Dorsolateral prefrontal cortex (tissue), 120 donors: ENCODE measurements at regions of chr18 and their contacts with region 1.

Region 1: DNA sequence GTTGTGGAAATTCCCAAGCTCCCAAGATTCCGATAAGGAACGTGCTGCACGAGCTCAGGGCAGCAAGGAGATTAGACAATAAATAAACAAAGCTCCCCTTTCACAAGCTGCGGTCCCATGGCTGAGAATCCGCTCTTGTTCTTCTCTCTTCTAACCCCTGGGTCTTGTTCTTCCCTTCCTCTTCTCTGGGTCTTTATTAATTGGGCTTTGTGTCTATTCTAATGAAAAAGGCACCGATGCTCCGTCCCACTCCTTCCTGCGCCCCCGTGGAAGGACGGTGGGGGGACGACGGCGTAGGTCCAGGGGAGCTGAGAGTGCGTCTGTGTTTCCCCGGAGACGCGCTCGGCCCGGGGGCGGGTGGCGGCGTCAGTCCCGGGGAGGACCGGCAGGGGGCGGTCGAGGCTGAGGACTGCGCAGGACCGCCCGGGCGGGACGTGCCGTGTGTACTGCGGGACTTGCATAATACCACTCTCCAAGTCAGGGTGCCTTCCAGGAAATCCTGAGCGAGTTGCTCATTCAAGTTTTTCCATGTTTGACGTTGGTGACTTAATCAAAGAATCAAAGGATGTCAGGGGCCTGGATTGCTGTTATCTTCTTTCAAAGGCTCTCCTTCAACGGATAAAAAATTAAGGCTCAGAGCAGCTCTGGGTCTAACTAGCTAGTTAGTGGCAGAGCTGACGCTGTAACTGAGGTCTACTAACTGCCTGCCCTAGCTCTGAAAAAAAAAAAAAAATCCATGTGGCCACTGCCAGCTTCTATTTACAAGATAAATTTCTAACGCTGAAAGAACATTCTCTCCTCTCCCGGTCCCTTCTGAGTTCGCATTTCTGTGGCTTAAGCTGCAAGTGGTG is 321.4 kb downstream of the TGIF1 start:
- DNase-seq: peak; percentile 76 to 94 (median 84)
- H3K4me3 ChIP-seq: peak overlapping the region; percentile 15 to 71 (median 51)
- H3K27ac ChIP-seq: peak overlapping the region in 58 of 59 donors; percentile 23 to 89 (median 71)
- H3K27me3 ChIP-seq: no peaks in the 10 kb centered on the region
- CTCF ChIP-seq: peak; percentile 81 to 99 (median 96)

Region 2: DNA sequence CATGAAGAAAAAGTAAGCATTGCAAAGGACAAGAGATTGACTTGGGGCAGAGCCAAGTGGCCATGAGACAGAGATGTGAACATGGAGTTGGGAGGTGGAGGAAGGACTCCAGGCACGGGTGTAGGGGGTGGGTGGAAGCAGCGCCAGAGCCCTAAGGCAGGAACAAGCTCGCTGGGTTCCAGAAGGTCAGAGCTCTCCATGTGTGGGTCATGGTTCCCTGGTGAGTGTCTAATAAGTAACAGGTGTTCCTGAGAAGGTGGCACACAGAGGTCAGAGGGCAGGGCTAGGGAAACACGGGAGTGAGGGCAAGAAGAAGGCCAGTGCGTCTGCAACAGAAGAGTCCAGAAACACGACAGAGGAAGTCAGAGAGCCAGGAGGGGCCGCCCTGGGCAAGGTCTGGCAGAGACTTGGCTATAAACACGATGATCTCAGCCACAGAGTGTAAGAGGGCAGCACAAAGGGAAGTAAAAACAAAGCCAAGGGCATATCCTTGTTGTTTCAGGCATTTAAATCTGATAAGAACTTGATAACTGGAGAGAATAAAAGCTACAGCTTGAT is 60.6 kb before region 1 on chr18:
- intact Hi-C with region 1: loop called in 1 of 2 experiments (anchors 10 kb)
- DNase-seq: peak in 1 of 10 donors; percentile 66
- H3K4me3 ChIP-seq: no peak overlapping the region
- H3K27ac ChIP-seq: peak overlapping the region in 53 of 59 donors; percentile 5 to 89 (median 65)
- H3K27me3 ChIP-seq: no peaks in the 10 kb centered on the region
- CTCF ChIP-seq: no peak

Region 3: DNA sequence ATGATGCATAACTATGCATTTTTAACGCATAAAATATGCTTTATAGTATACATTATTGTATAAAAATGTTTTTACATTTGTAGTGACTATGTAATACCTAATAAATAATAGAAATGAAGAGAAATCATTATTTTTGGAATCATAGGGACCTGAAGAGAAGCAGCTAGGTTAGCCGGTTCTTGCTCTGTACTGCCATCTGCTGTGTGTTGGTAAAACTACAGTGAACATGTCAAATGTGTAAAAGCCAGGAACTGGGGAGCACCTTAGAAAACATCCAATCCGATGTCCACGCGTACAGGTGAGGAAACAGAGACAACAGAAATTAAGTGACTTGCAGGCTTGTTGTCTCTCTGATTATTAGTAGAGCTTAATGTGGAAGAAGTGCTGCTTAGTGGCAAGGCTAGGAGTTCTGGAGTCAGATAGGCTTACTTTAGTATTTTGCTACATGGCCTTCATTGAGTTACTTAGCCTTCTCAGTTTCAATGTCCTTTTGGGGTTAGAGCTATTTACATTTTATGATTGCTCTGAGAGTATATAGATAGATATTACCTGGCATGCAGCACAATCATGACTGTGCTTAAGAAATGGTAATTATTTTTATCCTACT is 297.3 kb after region 1 on chr18:
- intact Hi-C with region 1: loop called in 1 of 2 experiments (anchors 10 kb)
- DNase-seq: peak in 3 of 10 donors; percentile 13 to 56 (median 47)
- H3K4me3 ChIP-seq: no peak overlapping the region
- H3K27ac ChIP-seq: no peak overlapping the region
- H3K27me3 ChIP-seq: no peaks in the 10 kb centered on the region
- CTCF ChIP-seq: peak; percentile 33 to 82 (median 73)